Activated CD8-positive, alpha-beta T cell treated with anti-CD3 and anti-CD28 coated beads, Interleukin-2, amount 10 ng/mL, durations not matched to agents 7 days and 5 days (primary cell): ENCODE measurements at regions of chr11 and their contacts with region 1.

Region 1: GRCh38 chr11:87421422-87421821 is 383.7 kb downstream of the TMEM135 start:
- DNase-seq: peak; percentile 48
- ATAC-seq: no peak
- H3K4me3 Mint-ChIP-seq: no peak overlapping the region
- H3K27ac Mint-ChIP-seq: no peak overlapping the region
- H3K4me1 Mint-ChIP-seq: no peaks in the 10 kb centered on the region
- H3K27me3 Mint-ChIP-seq: no peaks in the 10 kb centered on the region

Region 2: GRCh38 chr11:87352759-87353707 is 68.4 kb before region 1 on chr11:
- CTCF ChIA-PET with region 1: interaction called, 83 read pairs
- POLR2A ChIA-PET with region 1: no interaction called
- DNase-seq: peak; percentile 87
- ATAC-seq: peak; percentile 96
- H3K4me3 Mint-ChIP-seq: no peak overlapping the region
- H3K27ac Mint-ChIP-seq: no peak overlapping the region
- H3K4me1 Mint-ChIP-seq: peaks cover 10% of the 10 kb centered on the region
- H3K27me3 Mint-ChIP-seq: peaks cover 11% of the 10 kb centered on the region